Activated CD4-positive, alpha-beta T cell treated with anti-CD3 and anti-CD28 coated beads for 36 hours (primary cell): ENCODE measurements at regions of chr9 and their contacts with region 1.

Region 1: GRCh38 chr9:136790927-136791641 is at the start of gene TMEM141:
- DNase-seq: peak; percentile 100
- ATAC-seq: peak; percentile 93
- H3K4me3 Mint-ChIP-seq: peak within 1 kb of the TSS; percentile 80
- H3K27ac Mint-ChIP-seq: peak within 1 kb of the TSS; percentile 84
- H3K4me1 Mint-ChIP-seq: peaks cover 20% of the 10 kb centered on the region
- H3K27me3 Mint-ChIP-seq: no peaks in the 10 kb centered on the region
- total RNA-seq, gene TMEM141: 30.9 to 47.1 TPM

Region 2: DNA sequence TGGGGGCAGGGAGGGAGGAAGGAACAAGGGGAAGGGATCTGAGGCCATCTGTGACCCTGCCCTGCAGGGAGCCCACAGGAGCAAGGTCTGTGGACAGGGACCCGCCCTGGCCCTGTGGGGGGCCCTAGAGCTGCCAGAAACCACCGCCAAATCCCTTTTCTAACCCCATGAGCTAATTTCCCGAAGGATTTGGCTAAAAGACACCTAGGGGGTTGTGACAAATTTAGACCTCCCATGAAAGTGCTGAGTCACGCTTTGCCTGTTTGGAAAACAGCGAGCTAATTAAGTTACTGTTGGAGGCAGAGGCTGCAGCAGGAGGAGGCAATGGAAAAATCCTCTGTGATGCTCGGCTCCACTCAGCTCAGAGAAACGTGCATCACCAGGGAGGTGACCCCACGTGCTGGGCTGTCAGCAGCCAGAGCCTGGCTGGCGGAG is 1653.7 kb before region 1 on chr9:
- CTCF ChIA-PET with region 1: no interaction called
- POLR2A ChIA-PET with region 1: no interaction called
- intact Hi-C with region 1: no loop called
- DNase-seq: no peak
- ATAC-seq: no peak
- H3K4me3 Mint-ChIP-seq: no peak overlapping the region
- H3K27ac Mint-ChIP-seq: no peak overlapping the region
- H3K4me1 Mint-ChIP-seq: no peaks in the 10 kb centered on the region
- H3K27me3 Mint-ChIP-seq: peaks cover 13% of the 10 kb centered on the region

Region 3: GRCh38 chr9:136777359-136777758 is 13.7 kb before region 1 on chr9:
- CTCF ChIA-PET with region 1: interaction called, 17 read pairs
- POLR2A ChIA-PET with region 1: interaction called, 3 read pairs
- intact Hi-C with region 1: no loop called
- DNase-seq: no peak
- ATAC-seq: no peak
- H3K4me3 Mint-ChIP-seq: no peak overlapping the region
- H3K27ac Mint-ChIP-seq: peak overlapping the region; percentile 4
- H3K4me1 Mint-ChIP-seq: no peaks in the 10 kb centered on the region
- H3K27me3 Mint-ChIP-seq: peaks cover 10% of the 10 kb centered on the region

Region 4: GRCh38 chr9:136902259-136902821 is 111.3 kb after region 1 on chr9:
- CTCF ChIA-PET with region 1: no interaction called
- POLR2A ChIA-PET with region 1: no interaction called
- intact Hi-C with region 1: loop called in 1 of 2 experiments (anchors 1 kb)
- DNase-seq: peak; percentile 93
- ATAC-seq: peak; percentile 85
- H3K4me3 Mint-ChIP-seq: peak overlapping the region; percentile 62
- H3K27ac Mint-ChIP-seq: peak overlapping the region; percentile 98
- H3K4me1 Mint-ChIP-seq: peaks cover 41% of the 10 kb centered on the region
- H3K27me3 Mint-ChIP-seq: no peaks in the 10 kb centered on the region

Region 5: GRCh38 chr9:137034863-137035761 is 244.0 kb after region 1 on chr9:
- CTCF ChIA-PET with region 1: interaction called, 11 read pairs
- POLR2A ChIA-PET with region 1: no interaction called
- intact Hi-C with region 1: loop called (anchors 1 kb)
- DNase-seq: peak; percentile 96
- ATAC-seq: peak; percentile 80
- H3K4me3 Mint-ChIP-seq: peak overlapping the region; percentile 66
- H3K27ac Mint-ChIP-seq: peak overlapping the region; percentile 83
- H3K4me1 Mint-ChIP-seq: peaks cover 36% of the 10 kb centered on the region
- H3K27me3 Mint-ChIP-seq: no peaks in the 10 kb centered on the region

Region 6: DNA sequence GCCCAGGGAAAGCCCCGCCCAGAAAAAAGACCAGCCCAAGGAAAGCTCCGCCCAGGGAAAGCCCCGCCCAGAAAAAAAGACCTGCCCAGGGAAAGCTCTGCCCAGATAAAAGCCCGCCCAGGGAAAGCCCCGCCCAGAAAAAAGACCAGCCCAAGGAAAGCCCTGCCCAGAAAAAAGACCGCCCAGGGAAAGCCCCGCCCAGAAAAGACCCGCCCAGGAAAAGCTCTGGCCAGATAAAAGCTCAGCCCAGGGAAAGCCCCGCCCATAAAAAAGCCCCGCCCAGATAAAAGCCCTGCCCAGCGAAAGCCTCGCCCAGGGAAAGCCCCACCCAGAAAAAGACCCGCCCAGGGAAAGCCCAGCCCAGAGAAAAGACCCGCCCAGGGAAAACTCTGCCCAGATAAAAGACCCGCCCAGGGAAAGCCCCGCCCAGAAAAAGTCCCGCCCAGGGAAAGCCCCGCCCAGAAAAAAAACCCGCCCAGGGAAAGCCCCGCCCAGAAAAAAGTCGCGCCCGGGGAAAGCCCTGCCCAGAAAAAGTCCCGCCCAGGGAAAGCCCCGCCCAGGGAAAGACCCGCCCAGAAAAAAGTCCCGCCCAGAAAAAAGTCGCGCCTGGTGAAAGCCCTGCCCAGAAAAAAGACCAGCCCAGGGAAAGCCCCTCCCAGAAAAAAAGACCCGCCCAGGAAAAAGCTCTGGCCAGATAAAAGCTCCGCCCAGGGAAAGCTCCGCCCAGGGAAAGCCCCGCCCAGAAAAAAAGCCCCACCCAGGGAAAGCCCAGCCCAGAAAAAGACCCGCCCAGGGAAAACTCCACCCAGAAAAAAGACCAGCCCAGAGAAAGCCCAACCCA is 359.8 kb after region 1 on chr9:
- CTCF ChIA-PET with region 1: no interaction called
- POLR2A ChIA-PET with region 1: no interaction called
- intact Hi-C with region 1: loop called in 1 of 2 experiments (anchors 2 kb)
- DNase-seq: peak; percentile 90
- ATAC-seq: peak; percentile 80
- H3K4me3 Mint-ChIP-seq: no peak overlapping the region
- H3K27ac Mint-ChIP-seq: no peak overlapping the region
- H3K4me1 Mint-ChIP-seq: peaks cover 8% of the 10 kb centered on the region
- H3K27me3 Mint-ChIP-seq: peaks cover 8% of the 10 kb centered on the region

Region 7: DNA sequence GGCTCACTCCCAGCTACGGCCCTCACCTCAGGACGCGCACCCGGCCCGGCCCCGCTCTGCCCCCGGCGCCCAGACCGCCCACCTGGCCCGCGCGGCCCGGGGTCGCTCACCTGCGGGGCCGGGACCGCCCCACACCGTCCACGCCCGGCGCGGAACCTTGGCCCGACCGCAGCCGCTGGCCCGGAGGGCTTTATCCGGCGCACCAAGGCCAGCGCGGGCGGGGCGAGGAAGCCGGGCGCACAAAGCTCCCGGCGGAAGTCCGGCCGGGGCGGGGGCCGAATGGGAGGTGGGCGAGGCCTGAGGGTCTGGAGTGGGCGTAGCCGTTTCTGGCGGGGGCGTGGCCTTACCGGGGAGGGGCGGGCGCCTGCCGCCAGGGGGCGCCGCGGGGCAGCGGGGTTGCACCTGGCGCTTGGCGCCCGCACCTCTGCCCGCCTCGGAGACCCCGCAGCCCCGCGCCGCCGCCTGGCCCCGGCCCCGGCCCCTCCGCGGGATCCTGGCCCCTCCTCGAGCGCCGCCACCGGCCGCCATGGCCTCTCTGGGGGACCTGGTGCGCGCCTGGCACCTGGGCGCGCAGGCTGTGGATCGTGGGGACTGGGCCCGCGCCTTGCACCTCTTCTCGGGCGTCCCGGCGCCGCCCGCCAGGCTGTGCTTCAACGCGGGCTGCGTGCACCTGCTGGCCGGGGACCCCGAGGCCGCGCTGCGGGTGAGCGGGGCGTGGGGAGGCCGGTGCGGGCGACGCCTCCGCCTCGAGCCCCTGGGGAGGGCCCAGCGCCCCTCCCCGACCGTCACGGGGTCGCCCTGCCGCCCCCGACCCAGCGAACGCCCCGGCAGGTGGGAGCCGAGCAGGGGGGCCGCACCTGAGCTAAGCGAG is 632.2 kb after region 1 on chr9 and contains the starts of genes EXD3 and NOXA1:
- CTCF ChIA-PET with region 1: no interaction called
- POLR2A ChIA-PET with region 1: no interaction called
- intact Hi-C with region 1: loop called in 1 of 2 experiments (anchors 1 kb)
- DNase-seq: peak; percentile 98
- ATAC-seq: peak; percentile 95
- H3K4me3 Mint-ChIP-seq: peak within 1 kb of the TSS; percentile 82
- H3K27ac Mint-ChIP-seq: peak within 1 kb of the TSS; percentile 66
- H3K4me1 Mint-ChIP-seq: peaks cover 12% of the 10 kb centered on the region
- H3K27me3 Mint-ChIP-seq: no peaks in the 10 kb centered on the region
- total RNA-seq, gene EXD3: 6.7 to 7.1 TPM
- total RNA-seq, gene NOXA1: 0.97 to 1.7 TPM